ENCODE measurements at regions of chr3 and their contacts with region 1.

Region 1: DNA sequence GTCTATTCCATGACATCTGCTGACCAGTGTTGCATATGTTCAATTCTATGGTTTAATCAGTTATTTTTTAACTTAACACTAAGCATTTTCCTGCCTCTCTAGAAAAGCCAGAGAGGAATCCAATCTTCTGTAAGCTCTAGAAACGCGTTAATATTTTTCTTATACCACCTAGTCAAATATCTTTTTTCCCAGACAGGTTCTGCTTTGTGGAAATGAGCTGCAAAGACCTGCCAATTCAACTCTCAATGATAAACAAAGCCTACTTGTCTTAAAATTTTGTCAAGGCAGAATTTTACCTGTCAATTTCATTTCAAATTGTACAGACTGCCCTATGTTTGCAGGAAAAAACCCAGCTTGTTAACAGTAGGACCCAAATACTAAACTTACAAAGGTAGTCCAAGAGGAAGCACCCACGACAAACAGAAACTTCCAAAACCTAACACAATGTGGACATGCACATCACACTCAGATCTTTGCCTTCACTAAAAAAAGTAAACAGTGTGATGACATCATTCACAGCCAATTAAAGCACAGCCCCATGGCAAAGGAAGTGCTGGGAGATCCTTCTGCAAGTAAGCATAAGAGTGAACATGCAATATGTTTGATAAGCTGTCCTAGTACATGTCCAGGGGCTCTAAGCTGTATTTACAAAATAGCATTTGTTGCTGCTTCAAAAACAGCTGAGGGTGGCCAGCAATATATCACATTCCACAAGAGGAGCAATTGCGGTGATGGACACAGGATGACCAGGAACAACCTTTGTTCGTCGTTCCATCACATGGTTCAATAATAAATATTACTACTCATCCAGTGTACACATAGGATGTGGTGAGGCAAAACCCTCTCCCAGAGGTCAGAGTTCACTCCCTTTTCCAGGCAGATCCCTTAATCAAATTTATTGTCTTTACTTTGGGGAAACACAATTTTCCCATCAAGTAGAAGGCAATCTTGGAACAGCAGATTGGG is 139.4 kb upstream of the TSC22D2 start:
- DNase-seq: no peak
- H3K4me3 ChIP-seq: no peak overlapping the region
- H3K27ac ChIP-seq: no peak overlapping the region
- H3K4me1 ChIP-seq: no peaks in the 10 kb centered on the region
- H3K27me3 ChIP-seq: no peaks in the 10 kb centered on the region
- CTCF ChIP-seq: no peak
- EP300 ChIP-seq: no peak
- POLR2A ChIP-seq: no peak

Region 2: GRCh38 chr3:150388498-150389418 is 120.0 kb after region 1 on chr3:
- intact Hi-C with region 1: loop called in 1 of 4 experiments (anchors 1 kb)
- DNase-seq: no peak
- H3K4me3 ChIP-seq: no peak overlapping the region
- H3K27ac ChIP-seq: no peak overlapping the region
- H3K4me1 ChIP-seq: no peaks in the 10 kb centered on the region
- H3K27me3 ChIP-seq: no peaks in the 10 kb centered on the region
- CTCF ChIP-seq: no peak
- EP300 ChIP-seq: no peak
- POLR2A ChIP-seq: no peak

Region 3: DNA sequence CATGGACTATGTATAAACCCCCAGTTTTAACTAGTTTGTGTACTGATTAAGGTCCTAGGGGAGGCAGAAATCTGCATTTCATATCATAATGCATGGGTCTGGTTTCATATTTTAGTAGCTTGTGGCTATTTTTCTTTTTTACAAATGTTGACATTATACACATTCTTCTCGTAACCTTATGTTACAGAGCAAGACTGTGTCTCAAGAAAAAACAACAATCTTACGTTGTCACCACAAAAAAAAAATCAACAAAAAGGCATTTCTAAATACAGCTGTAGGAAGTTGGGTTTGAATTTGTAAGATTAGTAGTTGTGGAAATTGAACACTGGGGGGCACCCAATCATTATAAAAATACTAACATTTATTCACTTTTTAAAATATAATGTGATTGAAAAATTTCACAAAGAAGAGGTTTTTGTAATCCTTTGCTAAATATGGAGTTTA is 259.7 kb after region 1 on chr3:
- intact Hi-C with region 1: no loop called
- DNase-seq: no peak
- H3K4me3 ChIP-seq: no peak overlapping the region
- H3K27ac ChIP-seq: no peak overlapping the region
- H3K4me1 ChIP-seq: peaks cover 1% of the 10 kb centered on the region
- H3K27me3 ChIP-seq: no peaks in the 10 kb centered on the region
- CTCF ChIP-seq: peak in 1 of 3 donors; percentile 21
- EP300 ChIP-seq: no peak
- POLR2A ChIP-seq: no peak

Measured in ovary (tissue), 10 donors.